ENCODE measurements at regions of chr17 and their contacts with region 1.

Region 1: DNA sequence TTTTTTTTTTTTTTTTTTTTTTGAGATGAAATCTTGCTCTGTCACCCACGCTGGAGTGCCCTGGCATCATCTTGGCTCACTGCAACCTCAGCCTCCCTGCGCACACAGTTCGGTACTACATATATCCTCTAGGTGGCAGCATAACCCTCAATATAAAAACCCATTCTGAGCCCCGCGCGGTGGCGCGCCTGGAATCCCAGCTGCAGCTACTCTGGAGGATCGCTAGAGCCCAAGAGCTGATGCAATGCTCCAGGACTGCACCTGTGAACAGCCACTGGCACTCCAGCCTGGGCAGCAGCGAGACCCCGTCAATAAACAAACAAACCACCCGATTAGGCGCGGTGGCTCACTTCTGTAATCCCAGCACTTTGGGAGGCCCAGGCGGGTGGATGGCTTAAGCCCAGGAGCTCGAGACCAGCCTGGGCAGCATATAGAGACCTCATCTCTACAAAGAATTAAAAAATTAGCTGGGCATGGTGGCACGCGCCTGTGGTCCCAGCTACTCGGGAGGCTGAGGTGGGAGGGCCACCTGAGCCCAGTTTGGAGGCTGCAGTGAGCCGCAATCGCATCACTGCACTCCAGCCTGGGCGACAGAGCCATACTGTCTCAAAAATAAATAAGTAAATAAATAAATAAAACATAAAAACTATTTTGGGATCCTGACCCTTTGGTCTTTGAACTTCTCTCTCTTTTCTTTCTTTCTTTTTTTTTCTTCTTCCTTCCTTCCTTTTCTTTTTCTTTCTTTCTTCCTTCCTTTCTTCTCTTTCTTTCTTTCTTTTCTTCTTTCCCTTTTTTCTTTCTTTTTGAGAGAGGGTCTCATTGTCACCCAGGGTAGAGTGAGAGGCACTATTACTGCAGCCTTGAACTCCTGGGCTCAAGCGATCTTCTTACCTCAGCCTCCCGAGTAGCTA is 15.4 kb upstream of the AKAP10 start:
- DNase-seq: peak; percentile 47
- ATAC-seq: peak; percentile 98
- H3K4me3 Mint-ChIP-seq: no peak overlapping the region
- H3K27ac Mint-ChIP-seq: no peak overlapping the region
- H3K4me1 Mint-ChIP-seq: peaks cover 4% of the 10 kb centered on the region
- H3K27me3 Mint-ChIP-seq: peaks cover 14% of the 10 kb centered on the region
- CTCF ChIP-seq: peak; percentile 25

Region 2: GRCh38 chr17:20009302-20010098 is 16.4 kb after region 1 on chr17 and contains the start of gene SPECC1:
- CTCF ChIA-PET with region 1: interaction called, 9 read pairs
- POLR2A ChIA-PET with region 1: no interaction called
- intact Hi-C with region 1: loop called (anchors 1 kb)
- DNase-seq: peak; percentile 96
- ATAC-seq: peak; percentile 99
- H3K4me3 Mint-ChIP-seq: peak within 1 kb of the TSS; percentile 87
- H3K27ac Mint-ChIP-seq: no peak within 1 kb of the TSS
- H3K4me1 Mint-ChIP-seq: peaks cover 13% of the 10 kb centered on the region
- H3K27me3 Mint-ChIP-seq: peaks cover 38% of the 10 kb centered on the region
- CTCF ChIP-seq: peak; percentile 94
- total RNA-seq, gene SPECC1: 7.5 and 11.5 TPM in 2 replicates

Region 3: GRCh38 chr17:20114466-20114865 is 121.4 kb after region 1 on chr17:
- CTCF ChIA-PET with region 1: interaction called, 25 read pairs
- POLR2A ChIA-PET with region 1: no interaction called
- intact Hi-C with region 1: loop called (anchors 1 kb)
- DNase-seq: no peak
- ATAC-seq: no peak
- H3K4me3 Mint-ChIP-seq: no peak overlapping the region
- H3K27ac Mint-ChIP-seq: no peak overlapping the region
- H3K4me1 Mint-ChIP-seq: no peaks in the 10 kb centered on the region
- H3K27me3 Mint-ChIP-seq: peaks cover 4% of the 10 kb centered on the region
- CTCF ChIP-seq: no peak

Region 4: GRCh38 chr17:20852239-20852989 is 859.4 kb after region 1 on chr17:
- CTCF ChIA-PET with region 1: no interaction called
- POLR2A ChIA-PET with region 1: no interaction called
- intact Hi-C with region 1: loop called (anchors 10 kb)
- DNase-seq: no peak
- ATAC-seq: peak; percentile 58
- H3K4me3 Mint-ChIP-seq: peak overlapping the region; percentile 61
- H3K27ac Mint-ChIP-seq: no peak overlapping the region
- H3K4me1 Mint-ChIP-seq: peaks cover 13% of the 10 kb centered on the region
- H3K27me3 Mint-ChIP-seq: peaks cover 34% of the 10 kb centered on the region
- CTCF ChIP-seq: no peak